CD4-positive, alpha-beta T cell (primary cell): ENCODE measurements at regions of chr9 and their contacts with region 1.

Region 1: GRCh38 chr9:127785023-127785932 is 556 bp upstream of the CDK9 start:
- DNase-seq: peak; percentile 80 to 95 (median 89)
- ATAC-seq: peak; percentile 51
- H3K4me3 ChIP-seq: peak overlapping the region; percentile 50
- H3K4me3 Mint-ChIP-seq: peak overlapping the region; percentile 81
- H3K27ac ChIP-seq: peak overlapping the region; percentile 85 to 89
- H3K27ac Mint-ChIP-seq: peak overlapping the region; percentile 97
- H3K4me1 ChIP-seq: peaks cover 84% of the 10 kb centered on the region
- H3K4me1 Mint-ChIP-seq: peaks cover 72% of the 10 kb centered on the region
- H3K27me3 ChIP-seq: no peaks in the 10 kb centered on the region
- H3K27me3 Mint-ChIP-seq: no peaks in the 10 kb centered on the region
- CTCF ChIP-seq: peak; percentile 76

Region 2: DNA sequence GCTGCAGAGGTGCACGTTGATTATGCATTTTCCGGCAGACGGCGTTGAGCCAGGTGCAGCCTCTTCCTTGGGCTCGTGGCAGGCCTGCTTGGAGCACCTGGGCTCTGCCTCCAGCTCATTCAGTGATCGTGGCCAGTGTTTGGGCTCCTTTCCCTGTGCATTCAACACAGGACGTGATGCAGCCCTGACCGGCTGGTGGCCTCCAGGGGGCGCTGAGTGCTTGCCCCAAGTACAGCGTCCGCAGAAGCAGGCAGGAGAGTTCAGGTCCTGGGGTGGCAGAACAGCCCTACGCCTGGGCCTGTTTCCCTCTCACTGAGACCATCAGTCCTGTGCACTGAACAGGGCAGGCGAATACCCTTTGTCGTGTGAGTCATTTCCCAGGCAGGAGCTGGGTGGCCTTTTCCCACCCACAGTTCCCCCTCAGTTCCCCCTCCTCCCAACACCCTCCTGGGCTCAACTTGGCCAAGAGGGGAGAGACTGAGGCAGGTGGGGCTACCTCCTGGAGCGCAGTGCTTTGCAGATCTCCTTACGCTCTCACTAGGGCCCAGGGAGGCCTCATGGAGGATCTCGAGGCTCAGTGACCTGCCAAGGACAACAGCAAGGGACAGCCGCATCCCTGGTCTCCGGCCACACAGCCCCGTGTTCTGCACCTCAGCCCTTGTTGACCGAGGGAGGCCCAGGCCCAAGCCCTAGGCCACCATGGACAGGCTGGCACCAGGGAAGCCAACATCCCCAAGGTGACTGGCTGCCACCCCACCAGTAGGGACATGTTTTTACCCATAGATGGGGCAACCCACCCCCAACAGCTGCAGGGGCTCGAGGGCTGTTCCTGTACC is 281.1 kb before region 1 on chr9:
- CTCF ChIA-PET with region 1: no interaction called
- POLR2A ChIA-PET with region 1: interaction called, 3 read pairs
- intact Hi-C with region 1: loop called in 1 of 2 experiments (anchors 1 kb)
- DNase-seq: peak; percentile 70 to 89 (median 78)
- ATAC-seq: peak; percentile 93
- H3K4me3 ChIP-seq: no peak overlapping the region
- H3K4me3 Mint-ChIP-seq: no peak overlapping the region
- H3K27ac ChIP-seq: no peak overlapping the region
- H3K27ac Mint-ChIP-seq: no peak overlapping the region
- H3K4me1 ChIP-seq: peaks cover 3% of the 10 kb centered on the region
- H3K4me1 Mint-ChIP-seq: peaks cover 4% of the 10 kb centered on the region
- H3K27me3 ChIP-seq: no peaks in the 10 kb centered on the region
- H3K27me3 Mint-ChIP-seq: no peaks in the 10 kb centered on the region
- CTCF ChIP-seq: peak; percentile 88

Region 3: GRCh38 chr9:127612939-127613582 is 172.2 kb before region 1 on chr9:
- CTCF ChIA-PET with region 1: no interaction called
- POLR2A ChIA-PET with region 1: no interaction called
- intact Hi-C with region 1: no loop called
- DNase-seq: peak; percentile 6 to 59 (median 20)
- ATAC-seq: peak; percentile 13
- H3K4me3 ChIP-seq: peak overlapping the region; percentile 57
- H3K4me3 Mint-ChIP-seq: peak overlapping the region; percentile 86
- H3K27ac ChIP-seq: no peak overlapping the region
- H3K27ac Mint-ChIP-seq: no peak overlapping the region
- H3K4me1 ChIP-seq: peaks cover 29% of the 10 kb centered on the region
- H3K4me1 Mint-ChIP-seq: peaks cover 26% of the 10 kb centered on the region
- H3K27me3 ChIP-seq: peaks cover 0 to 8% of the 10 kb centered on the region in 2 experiments
- H3K27me3 Mint-ChIP-seq: peaks cover 41% of the 10 kb centered on the region
- CTCF ChIP-seq: no peak

Region 4: GRCh38 chr9:127715394-127716337 is 69.6 kb before region 1 on chr9 and contains the starts of genes PTRH1 and TTC16:
- CTCF ChIA-PET with region 1: no interaction called
- POLR2A ChIA-PET with region 1: interaction called, 12 read pairs
- intact Hi-C with region 1: loop called in 1 of 2 experiments (anchors 1 kb)
- DNase-seq: peak; percentile 92 to 98 (median 96)
- ATAC-seq: peak; percentile 94
- H3K4me3 ChIP-seq: peak within 1 kb of the TSS; percentile 73
- H3K4me3 Mint-ChIP-seq: peak within 1 kb of the TSS; percentile 92
- H3K27ac ChIP-seq: peak within 1 kb of the TSS; percentile 51 to 76
- H3K27ac Mint-ChIP-seq: peak within 1 kb of the TSS; percentile 83
- H3K4me1 ChIP-seq: peaks cover 59% of the 10 kb centered on the region
- H3K4me1 Mint-ChIP-seq: peaks cover 30% of the 10 kb centered on the region
- H3K27me3 ChIP-seq: no peaks in the 10 kb centered on the region
- H3K27me3 Mint-ChIP-seq: no peaks in the 10 kb centered on the region
- CTCF ChIP-seq: no peak
- total RNA-seq, gene PTRH1: 4.5 to 5.9 TPM
- total RNA-seq, gene TTC16: 1.6 to 2.1 TPM

Region 5: DNA sequence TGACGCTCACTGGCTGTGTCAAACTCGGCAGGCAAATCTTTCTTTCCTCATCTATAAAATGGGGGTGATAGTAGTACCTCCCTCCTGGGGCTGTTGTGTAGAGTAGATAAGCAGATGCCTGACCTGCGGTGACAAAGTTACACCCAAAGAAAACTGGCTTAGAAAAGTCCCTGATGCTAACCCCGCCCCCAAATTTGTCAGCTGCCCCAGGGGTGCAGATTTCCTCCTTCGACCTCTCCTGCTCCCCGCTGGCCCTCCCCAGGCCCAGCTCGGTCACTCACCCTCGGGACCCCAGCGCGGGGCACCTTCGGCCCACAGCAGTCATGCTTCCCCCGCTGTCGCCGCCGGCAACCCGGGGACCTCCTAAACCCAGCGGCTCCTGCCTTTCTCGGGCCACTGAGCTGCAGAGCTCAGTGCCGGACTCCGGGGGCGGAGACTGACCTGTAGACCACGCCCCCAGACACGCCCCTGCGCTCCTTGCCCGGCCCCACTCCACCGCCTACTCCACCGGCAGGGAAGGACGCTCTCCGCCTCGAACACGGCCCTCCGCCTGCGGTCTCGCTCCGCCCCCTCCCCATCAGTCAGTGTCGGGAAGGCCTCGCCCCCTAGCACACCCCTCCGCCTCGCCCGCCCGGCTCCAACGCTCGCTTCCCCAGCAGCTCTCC is 14.2 kb before region 1 on chr9:
- CTCF ChIA-PET with region 1: interaction called, 24 read pairs
- POLR2A ChIA-PET with region 1: interaction called, 45 read pairs
- intact Hi-C with region 1: loop called (anchors 1 kb)
- DNase-seq: peak; percentile 87 to 98 (median 97)
- ATAC-seq: peak; percentile 80
- H3K4me3 ChIP-seq: peak overlapping the region; percentile 69
- H3K4me3 Mint-ChIP-seq: peak overlapping the region; percentile 90
- H3K27ac ChIP-seq: peak overlapping the region; percentile 90 to 91
- H3K27ac Mint-ChIP-seq: peak overlapping the region; percentile 97
- H3K4me1 ChIP-seq: peaks cover 86% of the 10 kb centered on the region
- H3K4me1 Mint-ChIP-seq: peaks cover 69% of the 10 kb centered on the region
- H3K27me3 ChIP-seq: no peaks in the 10 kb centered on the region
- H3K27me3 Mint-ChIP-seq: no peaks in the 10 kb centered on the region
- CTCF ChIP-seq: no peak

Region 6: GRCh38 chr9:127847155-127847463 is 61.8 kb after region 1 on chr9:
- CTCF ChIA-PET with region 1: no interaction called
- POLR2A ChIA-PET with region 1: no interaction called
- intact Hi-C with region 1: no loop called
- DNase-seq: no peak
- ATAC-seq: no peak
- H3K4me3 ChIP-seq: no peak overlapping the region
- H3K4me3 Mint-ChIP-seq: no peak overlapping the region
- H3K27ac ChIP-seq: no peak overlapping the region
- H3K27ac Mint-ChIP-seq: no peak overlapping the region
- H3K4me1 ChIP-seq: peaks cover 3% of the 10 kb centered on the region
- H3K4me1 Mint-ChIP-seq: peaks cover 11% of the 10 kb centered on the region
- H3K27me3 ChIP-seq: no peaks in the 10 kb centered on the region
- H3K27me3 Mint-ChIP-seq: no peaks in the 10 kb centered on the region
- CTCF ChIP-seq: no peak

Region 7: DNA sequence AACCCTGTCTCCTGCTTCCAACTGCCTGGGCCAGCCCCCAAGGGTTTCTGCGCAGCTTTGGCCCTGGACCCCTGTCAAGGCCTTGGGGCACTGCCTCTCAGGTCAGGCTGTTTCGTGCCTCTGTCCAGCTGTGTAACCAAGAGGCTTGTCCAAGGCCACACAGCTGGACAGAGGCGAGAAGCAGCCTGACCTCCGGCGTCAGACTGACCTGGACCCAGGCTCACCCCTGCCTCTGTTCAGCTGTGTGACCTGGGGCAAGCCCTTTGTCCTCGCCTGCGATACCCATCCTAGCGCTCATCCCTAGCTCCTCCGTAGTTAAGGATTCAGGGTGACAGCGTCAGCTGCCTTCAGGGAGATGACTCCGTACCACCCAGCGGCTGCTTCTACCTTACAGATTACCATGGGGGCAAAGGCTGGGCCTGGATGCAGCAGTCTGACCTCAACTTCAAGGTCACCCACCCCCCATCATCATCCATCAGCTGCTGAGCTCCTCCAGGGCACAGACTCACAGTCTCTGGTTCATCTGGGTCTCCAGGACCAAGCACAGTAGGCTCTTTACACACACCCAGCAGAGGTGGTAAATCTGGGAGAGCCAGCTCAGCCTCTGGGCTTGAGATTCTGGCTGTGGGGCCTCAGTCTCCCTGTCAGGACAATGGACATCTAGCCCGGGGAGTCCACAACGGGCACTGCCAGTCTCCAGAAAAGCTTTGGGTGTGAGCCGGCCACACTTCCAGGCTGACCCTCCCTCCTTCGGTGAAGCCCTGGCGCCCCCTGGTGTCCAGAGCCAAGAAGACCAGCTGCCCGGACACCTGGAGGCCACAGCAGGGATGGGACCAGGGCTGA is 84.3 kb after region 1 on chr9:
- CTCF ChIA-PET with region 1: interaction called, 16 read pairs
- POLR2A ChIA-PET with region 1: interaction called, 11 read pairs
- intact Hi-C with region 1: loop called (anchors 2 to 5 kb)
- DNase-seq: peak; percentile 52 to 88 (median 71)
- ATAC-seq: peak; percentile 62
- H3K4me3 ChIP-seq: no peak overlapping the region
- H3K4me3 Mint-ChIP-seq: no peak overlapping the region
- H3K27ac ChIP-seq: no peak overlapping the region
- H3K27ac Mint-ChIP-seq: no peak overlapping the region
- H3K4me1 ChIP-seq: peaks cover 23% of the 10 kb centered on the region
- H3K4me1 Mint-ChIP-seq: peaks cover 19% of the 10 kb centered on the region
- H3K27me3 ChIP-seq: no peaks in the 10 kb centered on the region
- H3K27me3 Mint-ChIP-seq: no peaks in the 10 kb centered on the region
- CTCF ChIP-seq: peak; percentile 99